PC-3 (cell line): ENCODE measurements at regions of chr3 and their contacts with region 1.

Region 1: DNA sequence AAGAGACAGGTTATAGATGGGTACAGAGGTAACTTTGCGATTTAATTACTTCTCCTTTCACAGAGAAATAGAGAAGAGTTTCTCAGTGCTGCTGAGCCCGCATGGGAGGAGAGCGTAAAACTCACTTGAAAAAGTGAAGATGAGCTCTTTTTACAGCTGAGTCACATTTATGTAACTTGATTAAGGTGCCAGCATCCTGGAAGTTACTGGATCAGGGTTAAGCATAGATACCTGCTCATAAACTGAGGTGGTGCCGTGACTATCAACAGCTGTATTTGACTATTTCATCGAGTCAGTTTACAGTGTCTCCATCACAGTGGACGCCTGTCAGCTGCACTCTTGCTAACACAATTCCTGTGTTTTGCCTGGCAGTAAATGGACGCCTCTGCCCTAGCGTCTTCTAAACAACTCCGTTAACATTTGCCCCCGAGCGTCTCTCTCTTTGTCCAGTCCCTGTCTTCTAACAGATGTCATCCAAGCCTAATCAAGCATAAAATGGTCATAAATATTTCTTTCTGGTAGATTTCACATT is 414.6 kb downstream of the FOXP1 start:
- DNase-seq: no peak
- ATAC-seq: peak; percentile 38
- H3K4me3 ChIP-seq: no peak overlapping the region
- H3K27ac ChIP-seq: no peak overlapping the region
- H3K4me1 ChIP-seq: peaks cover 13% of the 10 kb centered on the region
- H3K27me3 ChIP-seq: no peaks in the 10 kb centered on the region
- CTCF ChIP-seq: no peak

Region 2: GRCh38 chr3:71271596-71271995 is 102.7 kb after region 1 on chr3:
- CTCF ChIA-PET with region 1: no interaction called
- POLR2A ChIA-PET with region 1: interaction called, 19 read pairs
- intact Hi-C with region 1: no loop called
- DNase-seq: no peak
- ATAC-seq: no peak
- H3K4me3 ChIP-seq: no peak overlapping the region
- H3K27ac ChIP-seq: no peak overlapping the region
- H3K4me1 ChIP-seq: peaks cover 5% of the 10 kb centered on the region; the same call in 1 of the 2 replicates
- H3K27me3 ChIP-seq: no peaks in the 10 kb centered on the region
- CTCF ChIP-seq: no peak